Activated T-helper 2 cell treated with anti-CD3 and anti-CD28 coated beads, Interferon-gamma antibody, Interleukin-2, Interleukin-4, amounts not matched to agents 10 μg/mL and 5 μg/mL and 100 μg/mL, durations not matched to agents 14 hours and 24 hours and 36 hours (primary cell): ENCODE measurements at regions of chrX and their contacts with region 1.

Region 1: DNA sequence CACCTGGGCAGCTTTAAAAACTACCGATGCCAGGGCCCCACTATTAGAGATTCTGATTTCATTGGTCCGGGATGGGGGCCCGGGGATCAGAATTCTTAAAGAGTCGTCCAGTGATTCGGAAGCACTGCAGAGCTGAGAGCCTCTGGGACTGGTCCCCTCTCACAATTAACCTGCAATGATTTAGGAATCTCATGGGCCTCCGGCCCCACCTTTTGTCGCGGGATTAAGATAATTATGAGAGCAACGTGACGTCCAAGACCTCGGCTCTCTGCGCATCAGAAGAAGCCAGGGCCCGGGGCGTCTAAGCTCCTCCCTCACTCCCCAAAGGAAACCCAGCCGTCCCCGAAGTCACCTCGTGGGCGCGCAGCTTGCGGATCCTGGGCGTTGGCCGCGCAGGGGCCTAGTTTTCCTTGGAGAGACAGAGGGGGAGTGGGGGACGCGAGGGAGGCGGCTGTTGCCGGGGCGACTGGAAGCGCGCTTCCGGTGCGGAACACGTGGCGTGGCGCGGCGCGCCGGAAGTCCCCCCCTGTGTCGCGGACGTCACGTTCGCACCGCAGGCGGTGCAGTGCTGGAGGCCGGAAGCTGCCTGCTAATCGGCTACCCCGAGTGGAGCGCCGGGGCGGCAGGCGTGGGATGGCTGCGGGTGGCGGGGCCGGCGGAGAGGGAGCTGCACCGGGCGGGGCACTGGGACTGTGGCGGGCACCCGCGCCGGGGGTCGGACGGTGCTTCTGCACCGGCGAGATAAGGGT is at the start of gene GEMIN8:
- DNase-seq: peak; percentile 79
- H3K4me3 Mint-ChIP-seq: peak within 1 kb of the TSS; percentile 98
- H3K27ac Mint-ChIP-seq: peak within 1 kb of the TSS; percentile 98
- H3K4me1 Mint-ChIP-seq: peaks cover 22% of the 10 kb centered on the region
- H3K27me3 Mint-ChIP-seq: peaks cover 4% of the 10 kb centered on the region
- total RNA-seq, gene GEMIN8: 12.6 and 14.0 TPM in 2 replicates

Region 2: GRCh38 chrX:12946838-12947544 is 1082.6 kb before region 1 on chrX:
- intact Hi-C with region 1: loop called (anchors 2 kb)
- DNase-seq: peak; percentile 64
- H3K4me3 Mint-ChIP-seq: peak overlapping the region; percentile 30
- H3K27ac Mint-ChIP-seq: peak overlapping the region; percentile 87
- H3K4me1 Mint-ChIP-seq: peaks cover 56% of the 10 kb centered on the region
- H3K27me3 Mint-ChIP-seq: no peaks in the 10 kb centered on the region

Region 3: GRCh38 chrX:13653022-13653693 is 376.4 kb before region 1 on chrX and contains the start of gene TCEANC:
- intact Hi-C with region 1: loop called (anchors 1 kb)
- DNase-seq: peak; percentile 91
- H3K4me3 Mint-ChIP-seq: peak within 1 kb of the TSS; percentile 84
- H3K27ac Mint-ChIP-seq: peak within 1 kb of the TSS; percentile 89
- H3K4me1 Mint-ChIP-seq: peaks cover 17% of the 10 kb centered on the region
- H3K27me3 Mint-ChIP-seq: no peaks in the 10 kb centered on the region
- total RNA-seq, gene TCEANC: 2.5 and 2.8 TPM in 2 replicates

Region 4: GRCh38 chrX:13750204-13750603 is 279.4 kb before region 1 on chrX:
- intact Hi-C with region 1: loop called (anchors 1 kb)
- DNase-seq: no peak
- H3K4me3 Mint-ChIP-seq: no peak overlapping the region
- H3K27ac Mint-ChIP-seq: no peak overlapping the region
- H3K4me1 Mint-ChIP-seq: peaks cover 16% of the 10 kb centered on the region
- H3K27me3 Mint-ChIP-seq: no peaks in the 10 kb centered on the region

Region 5: DNA sequence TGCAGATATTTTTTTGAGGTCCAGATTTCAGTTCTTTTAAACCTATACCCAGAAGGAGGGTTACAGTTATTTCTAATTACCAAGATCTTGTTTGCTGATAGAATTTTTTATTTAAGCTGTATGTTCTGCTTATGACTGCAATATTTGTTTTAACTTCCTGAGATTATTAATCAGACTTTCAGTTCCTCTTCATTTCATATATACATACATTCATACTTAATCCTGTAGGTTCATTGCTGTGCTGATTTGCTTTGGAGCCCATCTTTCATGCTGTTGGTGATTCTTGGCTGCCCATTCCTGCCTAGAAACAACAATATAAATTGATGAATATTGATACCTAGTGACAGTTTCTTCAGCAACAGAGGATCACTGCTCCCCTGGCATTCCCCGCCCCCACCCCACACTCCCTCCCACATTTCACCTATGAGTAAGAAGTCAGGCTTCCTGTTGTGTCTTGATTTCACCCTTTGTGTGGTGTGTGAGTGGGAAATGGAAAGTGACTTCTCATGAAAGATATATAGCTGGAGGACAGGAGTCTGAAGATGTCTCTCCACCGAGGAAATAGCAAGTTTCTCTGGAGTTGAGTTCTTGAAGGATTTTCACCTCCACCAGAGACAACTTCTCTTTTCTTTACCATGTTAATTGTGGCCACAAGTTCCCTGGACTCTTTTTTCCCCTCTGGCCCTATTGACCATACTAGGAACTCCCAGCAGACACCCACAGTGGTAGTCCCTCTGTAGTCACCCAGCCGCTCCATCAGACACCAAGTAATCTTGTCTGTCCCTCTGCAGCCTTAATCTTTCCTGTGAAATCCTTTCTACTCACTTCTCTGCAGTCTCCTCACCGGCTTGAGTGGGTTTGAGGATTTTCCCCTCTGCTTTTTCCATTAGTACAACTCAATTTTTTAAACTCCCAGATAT is 1121.9 kb after region 1 on chrX:
- intact Hi-C with region 1: loop called (anchors 10 kb)
- DNase-seq: no peak
- H3K4me3 Mint-ChIP-seq: no peak overlapping the region
- H3K27ac Mint-ChIP-seq: peak overlapping the region; percentile 38
- H3K4me1 Mint-ChIP-seq: peaks cover 21% of the 10 kb centered on the region
- H3K27me3 Mint-ChIP-seq: peaks cover 7% of the 10 kb centered on the region